Testis (tissue), 5 donors: ENCODE measurements at regions of chr12 and their contacts with region 1.

Region 1: GRCh38 chr12:53543539-53543938 is 36.3 kb upstream of the NPFF start:
- DNase-seq: peak; percentile 80
- H3K4me3 ChIP-seq: no peak overlapping the region
- H3K27ac ChIP-seq: peak overlapping the region; percentile 70 to 81
- H3K4me1 ChIP-seq: peaks cover 23% of the 10 kb centered on the region
- H3K27me3 ChIP-seq: no peaks in the 10 kb centered on the region
- CTCF ChIP-seq: peak; percentile 75 to 96 (median 94)
- POLR2A ChIP-seq: no peak

Region 2: GRCh38 chr12:53441040-53441833 is 102.3 kb before region 1 on chr12 and contains the start of gene PRR13:
- intact Hi-C with region 1: no loop called
- DNase-seq: peak; percentile 100
- H3K4me3 ChIP-seq: peak within 1 kb of the TSS; percentile 61 to 74
- H3K27ac ChIP-seq: peak within 1 kb of the TSS; percentile 89 to 93
- H3K4me1 ChIP-seq: peaks cover 14% of the 10 kb centered on the region
- H3K27me3 ChIP-seq: no peaks in the 10 kb centered on the region
- CTCF ChIP-seq: no peak
- POLR2A ChIP-seq: peak; percentile 57
- total RNA-seq, gene PRR13: 43.4 to 48.5 TPM

Region 3: DNA sequence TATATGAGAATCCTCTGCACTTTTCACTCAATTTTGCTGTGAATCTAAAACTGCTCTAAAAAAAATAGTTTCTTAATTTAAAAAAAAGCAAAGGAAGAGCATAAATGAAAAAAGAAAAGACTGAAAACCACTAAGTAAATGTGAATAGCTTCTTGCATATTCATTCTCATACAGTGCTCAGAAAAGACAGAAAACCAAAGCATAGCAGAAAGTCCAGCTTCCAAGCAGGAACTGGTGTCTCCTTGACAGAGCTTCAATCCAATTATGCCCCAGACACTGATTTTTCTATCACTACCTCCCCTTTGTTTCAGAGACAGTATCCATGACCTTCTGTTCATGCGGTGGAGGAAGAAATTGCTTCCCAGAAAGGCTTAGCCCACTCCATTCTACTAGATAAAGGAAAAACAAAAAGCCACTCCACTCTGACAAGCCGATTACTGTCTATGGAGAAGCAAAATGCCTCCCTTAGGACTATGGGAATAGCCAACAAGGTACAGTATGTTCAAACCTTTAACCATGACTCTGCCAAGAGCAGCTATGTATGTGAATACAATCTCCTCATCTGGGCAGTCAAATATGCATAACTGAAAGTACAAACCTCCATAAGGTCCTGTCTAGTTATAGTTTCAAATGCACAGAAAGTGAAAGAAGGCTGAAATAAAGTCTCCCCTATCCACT is 42.0 kb after region 1 on chr12:
- intact Hi-C with region 1: no loop called
- DNase-seq: no peak
- H3K4me3 ChIP-seq: no peak overlapping the region
- H3K27ac ChIP-seq: peak overlapping the region in 1 of 2 donors; percentile 46
- H3K4me1 ChIP-seq: peaks cover 12% of the 10 kb centered on the region
- H3K27me3 ChIP-seq: no peaks in the 10 kb centered on the region
- CTCF ChIP-seq: no peak
- POLR2A ChIP-seq: no peak

Region 4: GRCh38 chr12:53675651-53676453 is 132.3 kb after region 1 on chr12 and contains the start of gene ATP5MC2:
- intact Hi-C with region 1: loop called (anchors 10 kb)
- DNase-seq: peak; percentile 99
- H3K4me3 ChIP-seq: peak within 1 kb of the TSS; percentile 61 to 87
- H3K27ac ChIP-seq: peak within 1 kb of the TSS; percentile 97 to 99
- H3K4me1 ChIP-seq: peaks cover 23% of the 10 kb centered on the region
- H3K27me3 ChIP-seq: no peaks in the 10 kb centered on the region
- CTCF ChIP-seq: peak; percentile 98 to 100 (median 100)
- POLR2A ChIP-seq: peak; percentile 56
- total RNA-seq, gene ATP5MC2: 201 to 304 TPM